Heart left ventricle (tissue), 16 donors: ENCODE measurements at regions of chrX and their contacts with region 1.

Region 1: GRCh38 chrX:136496770-136497598 is at the start of gene HTATSF1:
- DNase-seq: peak; percentile 83 to 89 (median 86)
- ATAC-seq: peak; percentile 78 to 95 (median 92)
- H3K4me3 ChIP-seq: peak within 1 kb of the TSS; percentile 46 to 95 (median 69)
- H3K27ac ChIP-seq: peak within 1 kb of the TSS; percentile 89 to 98 (median 94)
- H3K4me1 ChIP-seq: peaks cover 0 to 21% (median 4%) of the 10 kb centered on the region in 12 donors
- H3K27me3 ChIP-seq: peaks cover 0 to 9% (median 0%) of the 10 kb centered on the region in 9 donors
- CTCF ChIP-seq: no peak
- POLR2A ChIP-seq: peak in 1 of 2 donors; percentile 16
- total RNA-seq, gene HTATSF1: 49.8 to 83.0 (median 66.7) TPM

Region 2: GRCh38 chrX:136162831-136163570 is 334.0 kb before region 1 on chrX:
- intact Hi-C with region 1: loop called in 1 of 10 experiments (anchors 10 kb)
- DNase-seq: peak; percentile 47 to 70 (median 63)
- ATAC-seq: peak; percentile 41 to 80 (median 78)
- H3K4me3 ChIP-seq: peak overlapping the region in 1 of 12 donors; percentile 0
- H3K27ac ChIP-seq: peak overlapping the region in 10 of 12 donors; percentile 9 to 87 (median 56)
- H3K4me1 ChIP-seq: peaks cover 0 to 76% (median 11%) of the 10 kb centered on the region in 12 donors
- H3K27me3 ChIP-seq: peaks cover 0 to 8% (median 0%) of the 10 kb centered on the region in 9 donors
- CTCF ChIP-seq: peak; percentile 47 to 78 (median 66)
- POLR2A ChIP-seq: no peak

Region 3: DNA sequence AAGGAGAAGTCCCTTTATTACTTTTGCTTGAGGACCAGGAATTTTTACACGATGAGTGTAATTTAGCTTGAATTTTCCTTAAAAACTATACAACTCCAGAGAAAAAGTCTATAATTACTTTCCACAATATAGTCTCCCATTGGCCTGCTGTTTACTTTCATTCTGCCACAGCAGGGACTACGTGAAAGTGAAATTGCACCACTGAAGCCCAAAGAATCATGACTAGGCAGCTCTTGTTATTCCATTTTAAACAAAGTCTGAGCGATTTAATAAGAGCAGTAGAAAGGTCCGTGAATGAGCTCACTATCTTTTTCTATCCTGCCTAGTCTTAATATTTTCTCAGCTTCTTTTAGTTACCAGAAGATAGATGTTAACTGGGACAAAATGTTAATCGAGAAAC is 127.6 kb before region 1 on chrX:
- intact Hi-C with region 1: no loop called
- DNase-seq: no peak
- ATAC-seq: no peak
- H3K4me3 ChIP-seq: no peak overlapping the region
- H3K27ac ChIP-seq: no peak overlapping the region
- H3K4me1 ChIP-seq: no peaks in the 10 kb centered on the region
- H3K27me3 ChIP-seq: peaks cover 0 to 9% (median 0%) of the 10 kb centered on the region in 9 donors
- CTCF ChIP-seq: no peak
- POLR2A ChIP-seq: no peak

Region 4: DNA sequence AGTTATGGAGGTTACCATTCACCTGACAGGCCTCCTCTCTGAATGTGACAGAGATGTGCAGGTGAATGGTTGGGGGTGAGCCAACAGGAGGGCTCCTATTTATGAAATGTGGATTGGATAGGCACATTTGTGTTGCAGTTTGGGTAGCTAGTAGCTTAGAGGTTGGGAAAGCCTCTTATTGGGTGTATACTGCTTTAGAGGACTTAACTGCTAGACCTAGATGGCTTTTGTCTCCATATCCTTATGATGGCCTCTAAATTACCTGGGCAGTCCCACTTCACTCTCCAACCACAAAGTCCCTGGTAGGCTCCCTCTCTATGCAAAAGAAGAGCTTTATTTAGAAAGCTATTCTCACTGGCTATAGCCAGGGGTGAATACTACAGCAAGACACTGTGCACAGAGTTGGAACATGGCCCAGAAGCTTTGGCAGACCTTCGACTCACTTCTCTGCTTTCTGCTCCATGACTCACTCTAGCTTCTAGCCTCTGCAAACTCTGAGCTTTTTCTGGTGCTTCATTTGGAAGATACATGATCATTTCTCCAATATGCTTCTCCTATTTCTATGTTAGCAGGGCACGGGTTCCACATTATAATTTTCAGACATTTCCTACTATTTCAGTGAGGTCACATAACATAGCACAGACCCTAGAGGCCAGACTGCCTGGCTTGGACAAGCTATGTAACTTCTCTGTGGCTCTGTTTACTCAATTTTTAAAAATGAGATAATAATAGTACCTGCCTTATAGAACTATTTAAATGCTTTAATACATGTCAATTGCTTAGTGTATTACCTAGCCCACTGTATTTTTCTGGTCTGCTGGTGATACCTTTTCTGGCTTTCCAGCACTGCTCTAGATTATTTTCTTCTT is 29.0 kb after region 1 on chrX:
- intact Hi-C with region 1: loop called in 1 of 10 experiments (anchors 2 kb)
- DNase-seq: peak; percentile 68 to 85 (median 72)
- ATAC-seq: peak; percentile 93 to 99 (median 99)
- H3K4me3 ChIP-seq: no peak overlapping the region
- H3K27ac ChIP-seq: peak overlapping the region; percentile 28 to 86 (median 66)
- H3K4me1 ChIP-seq: peaks cover 0 to 17% (median 0%) of the 10 kb centered on the region in 12 donors
- H3K27me3 ChIP-seq: peaks cover 0 to 1% (median 0%) of the 10 kb centered on the region in 9 donors
- CTCF ChIP-seq: no peak
- POLR2A ChIP-seq: no peak

Region 5: DNA sequence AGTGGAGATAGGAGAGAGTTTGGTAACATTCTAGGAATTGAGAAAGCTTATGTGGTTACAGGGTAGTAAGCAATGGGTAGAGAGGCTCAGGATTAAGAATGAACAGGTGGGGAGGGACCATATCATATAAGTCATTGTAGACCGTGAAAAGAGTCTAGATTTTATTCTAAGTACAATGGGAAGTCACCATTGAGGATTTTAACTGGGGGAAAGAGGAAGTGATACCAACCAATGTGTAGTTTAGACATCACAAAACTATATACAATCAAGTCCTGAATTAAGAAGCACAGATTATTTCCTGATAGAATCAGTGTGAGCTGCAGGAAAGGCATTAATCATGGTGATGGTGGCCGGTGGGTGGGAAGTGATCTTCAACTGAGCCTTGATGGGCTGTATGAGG is 890.7 kb after region 1 on chrX:
- intact Hi-C with region 1: no loop called
- DNase-seq: no peak
- ATAC-seq: no peak
- H3K4me3 ChIP-seq: no peak overlapping the region
- H3K27ac ChIP-seq: no peak overlapping the region
- H3K4me1 ChIP-seq: no peaks in the 10 kb centered on the region
- H3K27me3 ChIP-seq: no peaks in the 10 kb centered on the region
- CTCF ChIP-seq: no peak
- POLR2A ChIP-seq: no peak